MCF 10A (cell line): ENCODE measurements at regions of chr16 and their contacts with region 1.

Region 1: DNA sequence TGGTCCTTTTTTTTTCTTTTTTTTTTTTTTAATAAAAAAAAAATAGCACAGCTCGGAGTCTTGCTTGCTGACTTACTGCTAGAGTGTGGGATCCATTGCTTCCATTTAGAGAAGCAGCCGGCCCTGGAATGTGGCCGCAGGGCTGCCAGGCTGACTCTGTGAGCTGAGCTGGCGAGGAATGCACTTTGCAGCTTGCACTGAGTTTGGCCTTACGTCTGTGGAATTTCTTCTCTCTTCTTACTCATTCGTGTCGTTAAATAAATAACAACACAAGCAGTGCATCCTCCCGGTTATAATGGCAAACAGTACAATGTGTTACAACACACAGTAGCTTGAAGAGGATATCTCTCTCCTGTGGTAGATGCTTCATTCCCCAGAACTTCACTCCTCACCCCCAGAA is 69.2 kb downstream of the PRKCB start:
- DNase-seq: peak; percentile 68
- H3K4me3 Mint-ChIP-seq: no peak overlapping the region
- H3K27ac Mint-ChIP-seq: no peak overlapping the region
- H3K4me1 Mint-ChIP-seq: peaks cover 19% of the 10 kb centered on the region
- H3K27me3 Mint-ChIP-seq: no peaks in the 10 kb centered on the region
- CTCF ChIP-seq: no peak

Region 2: GRCh38 chr16:22743401-22743800 is 1161.6 kb before region 1 on chr16:
- CTCF ChIA-PET with region 1: no interaction called
- POLR2A ChIA-PET with region 1: no interaction called
- intact Hi-C with region 1: no loop called
- DNase-seq: no peak
- H3K4me3 Mint-ChIP-seq: no peak overlapping the region
- H3K27ac Mint-ChIP-seq: no peak overlapping the region
- H3K4me1 Mint-ChIP-seq: no peaks in the 10 kb centered on the region
- H3K27me3 Mint-ChIP-seq: peaks cover 73% of the 10 kb centered on the region
- CTCF ChIP-seq: no peak

Region 3: DNA sequence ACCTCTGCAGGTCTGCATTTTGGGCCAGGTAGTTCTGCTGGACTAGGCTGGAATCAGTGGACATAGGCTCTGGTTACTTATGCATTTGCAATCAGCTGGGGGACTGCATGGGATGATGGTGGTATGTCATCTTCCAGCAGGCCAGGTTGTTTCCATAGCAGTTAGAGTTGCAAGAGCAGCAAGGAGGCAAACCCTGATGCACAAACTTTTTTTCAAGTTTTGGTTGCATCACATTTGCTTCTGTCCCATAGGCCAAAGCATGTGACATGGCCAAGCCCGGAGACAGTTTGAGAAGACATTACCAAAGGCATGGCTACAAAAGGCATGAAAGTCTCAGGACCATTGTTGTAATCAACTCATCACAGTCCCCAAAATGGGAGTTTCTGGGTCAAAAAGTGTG is 11.0 kb before region 1 on chr16:
- CTCF ChIA-PET with region 1: interaction called, 4 read pairs
- POLR2A ChIA-PET with region 1: interaction called, 21 read pairs
- intact Hi-C with region 1: no loop called
- DNase-seq: no peak
- H3K4me3 Mint-ChIP-seq: no peak overlapping the region
- H3K27ac Mint-ChIP-seq: no peak overlapping the region
- H3K4me1 Mint-ChIP-seq: no peaks in the 10 kb centered on the region
- H3K27me3 Mint-ChIP-seq: peaks cover 15% of the 10 kb centered on the region
- CTCF ChIP-seq: no peak

Region 4: DNA sequence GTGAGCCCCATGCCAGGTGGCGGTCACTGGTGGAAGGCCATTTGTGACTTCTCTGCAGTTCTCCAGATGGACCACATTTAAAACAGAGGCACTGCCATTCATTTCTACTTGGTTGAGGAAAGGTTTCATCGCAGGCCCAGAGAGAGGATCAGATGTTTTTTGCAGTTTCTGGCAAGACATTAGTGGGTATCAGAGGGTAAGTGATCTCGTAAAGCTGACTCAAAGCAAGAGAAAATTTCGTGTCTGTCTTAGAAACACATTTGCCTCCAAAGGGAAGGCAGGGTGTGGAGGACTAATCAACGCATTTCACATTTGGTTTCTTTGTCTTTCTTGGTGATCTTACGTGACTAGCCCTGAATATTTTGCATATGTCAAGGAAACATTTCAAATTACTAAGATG is 12.6 kb after region 1 on chr16:
- CTCF ChIA-PET with region 1: no interaction called
- POLR2A ChIA-PET with region 1: interaction called, 11 read pairs
- intact Hi-C with region 1: no loop called
- DNase-seq: no peak
- H3K4me3 Mint-ChIP-seq: no peak overlapping the region
- H3K27ac Mint-ChIP-seq: no peak overlapping the region
- H3K4me1 Mint-ChIP-seq: no peaks in the 10 kb centered on the region
- H3K27me3 Mint-ChIP-seq: peaks cover 15% of the 10 kb centered on the region
- CTCF ChIP-seq: no peak

Region 5: GRCh38 chr16:23941963-23942564 is 37.0 kb after region 1 on chr16:
- CTCF ChIA-PET with region 1: no interaction called
- POLR2A ChIA-PET with region 1: no interaction called
- intact Hi-C with region 1: no loop called
- DNase-seq: no peak
- H3K4me3 Mint-ChIP-seq: no peak overlapping the region
- H3K27ac Mint-ChIP-seq: no peak overlapping the region
- H3K4me1 Mint-ChIP-seq: no peaks in the 10 kb centered on the region
- H3K27me3 Mint-ChIP-seq: peaks cover 44% of the 10 kb centered on the region
- CTCF ChIP-seq: no peak